HCT116 (cell line): ENCODE measurements at regions of chr13 and their contacts with region 1.

Region 1: GRCh38 chr13:85806553-85807175 is 7.4 kb upstream of the SLITRK6 start:
- DNase-seq: peak; percentile 28
- ATAC-seq: 0 out of 2 replicates have a peak, but pooled peaks have one; percentile 44
- H3K4me3 ChIP-seq: no peak overlapping the region
- H3K27ac ChIP-seq: no peak overlapping the region
- H3K4me1 ChIP-seq: no peaks in the 10 kb centered on the region
- H3K27me3 ChIP-seq: no peaks in the 10 kb centered on the region
- CTCF ChIP-seq: peak in 2 of 3 experiments; percentile 21 to 50; a peak in 3 of 6 replicates
- POLR2A ChIP-seq: no peak
- RAD21 ChIP-seq: peak; percentile 62

Region 2: DNA sequence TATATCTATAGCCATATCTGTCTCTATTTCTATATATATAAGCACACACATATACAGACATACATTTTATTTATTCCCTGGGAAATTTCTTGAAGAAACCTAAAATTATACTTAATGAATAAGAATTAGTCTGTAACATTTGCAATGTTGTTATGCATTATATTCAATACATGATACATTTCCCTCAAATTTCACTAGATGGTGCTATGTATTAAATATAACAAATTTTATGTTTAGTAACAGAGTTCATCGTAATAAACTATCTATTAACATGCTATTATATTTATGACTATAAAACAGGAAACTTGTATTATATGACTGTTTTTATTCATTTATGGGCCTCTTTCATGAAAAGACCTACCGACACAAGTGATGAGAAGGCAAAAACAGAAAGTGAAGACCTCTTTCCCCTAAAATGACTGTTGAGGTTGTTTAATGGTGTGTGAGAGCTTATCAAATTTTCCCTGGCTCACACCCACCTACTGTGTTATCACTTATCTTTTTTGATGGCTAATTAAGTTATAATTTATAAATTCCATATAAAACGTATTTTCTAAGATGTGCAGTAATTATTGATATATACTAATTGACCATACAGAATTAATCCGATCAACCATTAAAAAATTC is 889.3 kb before region 1 on chr13:
- CTCF ChIA-PET with region 1: interaction called, 3 read pairs
- POLR2A ChIA-PET with region 1: no interaction called
- RAD21 ChIA-PET with region 1: no interaction called
- intact Hi-C with region 1: loop called (anchors 1 kb)
- DNase-seq: no peak
- ATAC-seq: no peak
- H3K4me3 ChIP-seq: no peak overlapping the region
- H3K27ac ChIP-seq: no peak overlapping the region
- H3K4me1 ChIP-seq: no peaks in the 10 kb centered on the region
- H3K27me3 ChIP-seq: no peaks in the 10 kb centered on the region
- CTCF ChIP-seq: peak in 2 of 3 experiments; percentile 11 to 30; a peak in 1 of 6 replicates
- POLR2A ChIP-seq: no peak
- RAD21 ChIP-seq: peak; percentile 42

Region 3: DNA sequence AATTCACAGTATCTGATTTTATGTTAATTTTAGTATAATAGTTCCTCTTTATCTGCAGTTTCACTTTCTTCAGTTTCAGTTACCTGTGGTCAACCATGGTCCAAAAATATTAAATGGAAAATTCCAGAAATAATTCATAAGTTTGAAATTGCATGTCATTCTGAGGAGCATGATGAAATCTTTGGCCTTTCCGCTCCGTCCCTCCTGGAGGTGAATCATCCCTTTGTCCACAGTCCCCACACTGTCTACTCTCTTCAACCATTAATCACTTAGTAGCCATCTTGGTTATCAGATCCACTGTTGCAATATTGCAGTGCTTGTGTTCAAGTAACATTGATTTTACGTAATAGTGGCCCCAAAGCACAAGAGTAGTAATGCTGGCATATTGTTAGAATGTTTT is 34.3 kb before region 1 on chr13:
- CTCF ChIA-PET with region 1: no interaction called
- POLR2A ChIA-PET with region 1: no interaction called
- RAD21 ChIA-PET with region 1: no interaction called
- intact Hi-C with region 1: no loop called
- DNase-seq: no peak
- ATAC-seq: no peak
- H3K4me3 ChIP-seq: no peak overlapping the region
- H3K27ac ChIP-seq: no peak overlapping the region
- H3K4me1 ChIP-seq: no peaks in the 10 kb centered on the region
- H3K27me3 ChIP-seq: no peaks in the 10 kb centered on the region
- CTCF ChIP-seq: no peak
- POLR2A ChIP-seq: no peak
- RAD21 ChIP-seq: no peak